Pancreas (tissue), 10 donors: ENCODE measurements at regions of chr9 and their contacts with region 1.

Region 1: DNA sequence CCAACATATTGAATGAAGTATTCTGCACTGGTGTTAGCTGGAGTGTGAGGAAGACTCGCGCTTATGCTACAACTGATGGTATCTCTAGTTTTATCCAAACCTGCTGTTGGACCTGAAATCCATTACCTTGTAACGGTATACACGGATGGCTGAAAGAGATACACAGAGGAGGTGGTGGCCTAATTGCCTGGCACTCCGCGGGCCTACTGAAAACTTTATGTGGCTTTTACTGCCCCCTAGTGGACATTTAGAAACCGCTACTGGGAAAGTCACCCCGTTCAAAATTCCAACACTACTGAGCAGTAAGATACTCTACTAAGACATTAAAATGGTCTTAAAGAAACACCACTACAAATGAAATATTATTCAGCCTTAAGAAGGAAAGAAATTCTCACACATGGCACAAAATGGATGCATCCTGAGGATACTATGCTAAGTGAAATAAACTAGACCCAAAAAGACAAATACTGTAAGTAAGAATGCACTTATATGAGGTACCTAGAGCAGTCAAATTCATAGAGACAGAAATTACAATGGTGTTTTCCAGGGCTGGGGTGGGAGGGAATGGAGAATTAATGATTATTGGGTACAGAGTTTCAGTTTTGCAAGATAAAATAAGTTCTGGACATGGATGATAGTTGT is 100.4 kb downstream of the TTLL11 start:
- DNase-seq: peak in 4 of 6 donors; percentile 44 to 63 (median 48)
- ATAC-seq: peak; percentile 90 to 92 (median 90)
- H3K4me3 ChIP-seq: no peak overlapping the region
- H3K27ac ChIP-seq: no peak overlapping the region
- H3K4me1 ChIP-seq: peaks cover 7 to 14% (median 13%) of the 10 kb centered on the region in 3 donors
- H3K27me3 ChIP-seq: no peaks in the 10 kb centered on the region
- CTCF ChIP-seq: peak; percentile 79 to 93 (median 86)

Region 2: GRCh38 chr9:121686930-121687541 is 305.7 kb before region 1 on chr9:
- intact Hi-C with region 1: loop called in 1 of 3 experiments (anchors 5 kb)
- DNase-seq: peak in 5 of 6 donors; percentile 58 to 89 (median 79)
- ATAC-seq: peak; percentile 82 to 94 (median 89)
- H3K4me3 ChIP-seq: no peak overlapping the region
- H3K27ac ChIP-seq: no peak overlapping the region
- H3K4me1 ChIP-seq: no peaks in the 10 kb centered on the region
- H3K27me3 ChIP-seq: no peaks in the 10 kb centered on the region
- CTCF ChIP-seq: peak; percentile 71 to 84 (median 74)

Region 3: DNA sequence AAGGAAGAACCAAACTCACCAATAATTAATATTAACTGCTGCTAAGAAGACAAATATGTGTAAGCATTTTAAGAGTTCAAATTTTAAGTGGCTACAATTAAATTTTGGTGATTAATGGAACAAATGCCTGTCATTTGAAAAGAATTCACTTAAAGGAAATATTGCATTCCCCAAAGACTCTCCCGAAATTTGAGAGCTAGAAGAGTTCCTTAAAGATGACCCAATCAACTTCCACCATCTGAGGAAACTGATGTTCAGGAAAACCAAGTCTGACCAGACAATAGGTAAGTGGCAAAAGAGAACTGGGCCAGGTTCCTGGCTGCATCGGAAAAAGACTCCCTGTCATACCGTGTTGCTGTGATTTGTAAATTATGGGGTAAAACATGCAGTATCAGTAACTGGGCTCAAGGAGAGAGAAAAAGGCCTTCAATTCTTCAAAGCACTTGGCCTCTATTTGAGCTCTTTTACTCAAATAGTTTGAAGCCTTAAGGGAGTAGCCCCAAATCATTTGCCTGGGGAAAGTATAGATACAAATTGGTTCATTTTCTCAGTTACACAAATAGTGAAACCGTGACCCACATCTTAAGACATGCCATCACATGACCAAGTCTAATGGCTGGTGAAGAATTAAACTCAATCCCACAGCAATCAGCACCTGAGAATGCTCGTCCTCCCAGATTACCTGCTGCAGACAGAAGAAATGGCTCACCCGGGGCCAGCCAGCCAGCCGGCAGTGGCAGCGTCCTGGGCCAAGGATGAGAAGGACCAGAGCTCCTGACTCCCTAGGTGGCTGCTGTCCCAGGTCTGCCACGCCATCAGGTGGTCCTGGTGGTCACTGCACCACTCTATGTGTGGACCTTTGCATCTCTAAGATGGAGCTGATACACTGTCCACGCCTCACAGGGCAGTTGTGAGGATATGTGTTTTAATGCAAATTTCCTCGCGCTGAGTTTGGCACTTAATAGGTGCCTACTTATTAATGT is 62.5 kb before region 1 on chr9:
- intact Hi-C with region 1: loop called in 1 of 3 experiments (anchors 10 kb)
- DNase-seq: no peak
- ATAC-seq: no peak
- H3K4me3 ChIP-seq: no peak overlapping the region
- H3K27ac ChIP-seq: no peak overlapping the region
- H3K4me1 ChIP-seq: peaks cover 0 to 4% (median 1%) of the 10 kb centered on the region in 3 donors
- H3K27me3 ChIP-seq: no peaks in the 10 kb centered on the region
- CTCF ChIP-seq: no peak